Testis (tissue), 5 donors: ENCODE measurements at regions of chr10 and their contacts with region 1.

Region 1: GRCh38 chr10:69425511-69426298 is 9.0 kb upstream of the TACR2 start:
- DNase-seq: no peak
- H3K4me3 ChIP-seq: no peak overlapping the region
- H3K27ac ChIP-seq: no peak overlapping the region
- H3K4me1 ChIP-seq: no peaks in the 10 kb centered on the region
- H3K27me3 ChIP-seq: no peaks in the 10 kb centered on the region
- CTCF ChIP-seq: no peak
- POLR2A ChIP-seq: no peak

Region 2: DNA sequence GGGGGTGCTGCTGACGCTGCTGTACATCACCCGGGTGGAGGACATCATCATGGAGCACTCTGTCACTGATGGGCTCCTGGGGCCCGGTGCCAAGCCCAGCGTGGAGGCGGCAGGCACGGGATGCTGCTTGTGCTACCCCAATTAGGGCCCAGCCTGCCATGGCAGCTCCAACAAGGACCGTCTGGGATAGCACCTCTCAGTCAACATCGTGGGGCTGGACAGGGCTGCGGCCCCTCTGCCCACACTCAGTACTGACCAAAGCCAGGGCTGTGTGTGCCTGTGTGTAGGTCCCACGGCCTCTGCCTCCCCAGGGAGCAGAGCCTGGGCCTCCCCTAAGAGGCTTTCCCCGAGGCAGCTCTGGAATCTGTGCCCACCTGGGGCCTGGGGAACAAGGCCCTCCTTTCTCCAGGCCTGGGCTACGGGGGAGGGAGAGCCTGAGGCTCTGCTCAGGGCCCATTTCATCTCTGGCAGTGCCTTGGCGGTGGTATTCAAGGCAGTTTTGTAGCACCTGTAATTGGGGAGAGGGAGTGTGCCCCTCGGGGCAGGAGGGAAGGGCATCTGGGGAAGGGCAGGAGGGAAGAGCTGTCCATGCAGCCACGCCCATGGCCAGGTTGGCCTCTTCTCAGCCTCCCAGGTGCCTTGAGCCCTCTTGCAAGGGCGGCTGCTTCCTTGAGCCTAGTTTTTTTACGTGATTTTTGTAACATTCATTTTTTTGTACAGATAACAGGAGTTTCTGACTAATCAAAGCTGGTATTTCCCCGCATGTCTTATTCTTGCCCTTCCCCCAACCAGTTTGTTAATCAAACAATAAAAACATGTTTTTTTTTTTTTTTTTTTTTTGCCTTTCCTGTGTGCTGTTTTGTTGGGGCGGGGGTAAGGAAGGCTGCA is 81.4 kb after region 1 on chr10:
- intact Hi-C with region 1: loop called (anchors 5 kb)
- DNase-seq: peak; percentile 12
- H3K4me3 ChIP-seq: no peak overlapping the region
- H3K27ac ChIP-seq: no peak overlapping the region
- H3K4me1 ChIP-seq: peaks cover 7% of the 10 kb centered on the region
- H3K27me3 ChIP-seq: no peaks in the 10 kb centered on the region
- CTCF ChIP-seq: no peak
- POLR2A ChIP-seq: no peak

Region 3: GRCh38 chr10:70132098-70133029 is 706.7 kb after region 1 on chr10 and contains the start of gene AIFM2:
- intact Hi-C with region 1: no loop called
- DNase-seq: peak; percentile 77
- H3K4me3 ChIP-seq: peak within 1 kb of the TSS; percentile 64 to 84
- H3K27ac ChIP-seq: peak within 1 kb of the TSS; percentile 39 to 71
- H3K4me1 ChIP-seq: peaks cover 6% of the 10 kb centered on the region
- H3K27me3 ChIP-seq: no peaks in the 10 kb centered on the region
- CTCF ChIP-seq: no peak
- POLR2A ChIP-seq: no peak
- total RNA-seq, gene AIFM2: 7.1 TPM